ENCODE measurements at regions of chr3 and their contacts with region 1.

Region 1: GRCh38 chr3:13091898-13092611 is 18.8 kb upstream of the IQSEC1 start:
- DNase-seq: peak; percentile 84
- H3K4me3 Mint-ChIP-seq: no peak overlapping the region
- H3K27ac Mint-ChIP-seq: no peak overlapping the region
- H3K4me1 Mint-ChIP-seq: no peaks in the 10 kb centered on the region
- H3K27me3 Mint-ChIP-seq: peaks cover 42% of the 10 kb centered on the region
- CTCF ChIP-seq: peak; percentile 89

Region 2: GRCh38 chr3:13282986-13283876 is 191.2 kb after region 1 on chr3:
- CTCF ChIA-PET with region 1: interaction called, 14 read pairs
- intact Hi-C with region 1: loop called (anchors 10 kb)
- DNase-seq: peak; percentile 44
- H3K4me3 Mint-ChIP-seq: peak overlapping the region; percentile 47
- H3K27ac Mint-ChIP-seq: no peak overlapping the region
- H3K4me1 Mint-ChIP-seq: no peaks in the 10 kb centered on the region
- H3K27me3 Mint-ChIP-seq: peaks cover 48% of the 10 kb centered on the region
- CTCF ChIP-seq: peak; percentile 13

Region 3: DNA sequence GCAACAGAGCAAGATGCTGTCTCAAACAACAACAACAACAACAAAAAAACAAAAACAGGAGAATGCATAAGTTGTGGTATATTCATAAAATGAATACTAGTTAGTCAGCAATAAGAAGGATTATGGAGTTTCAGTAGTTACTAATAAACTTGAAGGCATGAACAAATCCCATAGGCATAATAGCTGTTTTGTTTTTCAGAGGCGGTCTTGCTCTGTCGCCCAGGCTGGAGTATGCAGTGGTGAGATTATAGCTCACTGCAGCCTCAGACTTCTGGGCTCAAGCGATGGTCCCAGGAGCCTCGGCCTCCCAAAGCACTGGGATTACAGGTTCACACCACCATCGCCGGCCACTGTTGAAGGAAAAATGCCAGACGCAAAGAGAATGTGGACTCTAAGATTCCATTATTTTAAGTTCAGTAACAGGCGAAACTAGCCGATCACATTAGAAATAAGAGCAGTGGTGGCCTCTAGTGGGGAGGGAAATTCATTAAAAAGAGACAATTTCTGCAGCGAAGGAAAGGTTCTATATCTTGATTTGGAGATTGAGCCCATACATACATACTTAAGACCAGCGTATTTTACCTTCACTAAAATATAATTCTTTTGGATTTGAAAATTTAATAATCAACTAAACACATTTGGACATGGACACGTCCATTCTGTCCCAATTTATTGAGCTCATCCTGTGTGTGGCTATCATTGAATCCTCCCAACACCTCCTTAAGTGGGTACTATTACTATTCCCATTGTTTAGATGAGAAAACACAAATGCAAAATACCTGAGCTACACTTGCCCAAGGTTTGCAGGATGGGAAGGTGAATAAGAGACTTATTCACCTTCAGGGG is 360.7 kb after region 1 on chr3:
- CTCF ChIA-PET with region 1: interaction called, 18 read pairs
- intact Hi-C with region 1: loop called (anchors 2 kb)
- DNase-seq: peak; percentile 38
- H3K4me3 Mint-ChIP-seq: peak overlapping the region; percentile 84
- H3K27ac Mint-ChIP-seq: peak overlapping the region; percentile 88
- H3K4me1 Mint-ChIP-seq: no peaks in the 10 kb centered on the region
- H3K27me3 Mint-ChIP-seq: no peaks in the 10 kb centered on the region
- CTCF ChIP-seq: peak; percentile 25